Caco-2 (cell line): ENCODE measurements at regions of chr17 and their contacts with region 1.

Region 1: GRCh38 chr17:56592487-56593085 is 913 bp upstream of the NOG start:
- DNase-seq: peak; percentile 46 to 80
- H3K4me3 ChIP-seq: peak overlapping the region; percentile 28
- H3K4me3 Mint-ChIP-seq: peak overlapping the region; percentile 74
- H3K27ac Mint-ChIP-seq: no peak overlapping the region
- H3K4me1 ChIP-seq: peaks cover 24% of the 10 kb centered on the region
- H3K4me1 Mint-ChIP-seq: no peaks in the 10 kb centered on the region
- H3K27me3 ChIP-seq: peaks cover 10% of the 10 kb centered on the region
- H3K27me3 Mint-ChIP-seq: peaks cover 51% of the 10 kb centered on the region
- CTCF ChIP-seq: peak; percentile 64 to 96

Region 2: DNA sequence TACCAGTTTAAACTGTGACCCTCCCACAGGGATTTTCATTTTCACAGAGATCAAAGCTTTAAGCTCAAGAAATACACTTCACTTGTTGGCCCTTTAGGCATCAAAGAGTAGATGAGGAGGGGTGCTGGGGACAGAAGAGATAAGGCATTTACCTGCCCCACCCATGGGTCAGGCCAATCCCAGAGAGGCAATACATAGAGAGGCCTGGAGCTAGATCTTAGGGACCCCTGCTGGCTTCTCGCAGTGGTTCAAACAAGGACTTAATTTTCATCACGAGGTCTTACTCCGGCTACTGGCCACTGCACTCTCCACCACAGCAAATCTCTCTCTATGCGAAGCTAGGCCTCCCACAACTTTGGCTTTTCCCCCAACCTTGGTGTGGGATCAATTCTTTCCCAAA is 47.5 kb after region 1 on chr17:
- CTCF ChIA-PET with region 1: interaction called, 5 read pairs
- POLR2A ChIA-PET with region 1: no interaction called
- intact Hi-C with region 1: loop called (anchors 2 kb)
- DNase-seq: peak in 1 of 2 experiments; percentile 25
- H3K4me3 ChIP-seq: no peak overlapping the region
- H3K4me3 Mint-ChIP-seq: no peak overlapping the region
- H3K27ac Mint-ChIP-seq: no peak overlapping the region
- H3K4me1 ChIP-seq: no peaks in the 10 kb centered on the region
- H3K4me1 Mint-ChIP-seq: peaks cover 7% of the 10 kb centered on the region
- H3K27me3 ChIP-seq: no peaks in the 10 kb centered on the region; the same call in 1 of the 2 replicates
- H3K27me3 Mint-ChIP-seq: peaks cover 31% of the 10 kb centered on the region
- CTCF ChIP-seq: no peak

Region 3: GRCh38 chr17:56653877-56654276 is 61.3 kb after region 1 on chr17:
- CTCF ChIA-PET with region 1: no interaction called
- POLR2A ChIA-PET with region 1: no interaction called
- intact Hi-C with region 1: loop called (anchors 1 kb)
- DNase-seq: peak in 1 of 2 experiments; percentile 60
- H3K4me3 ChIP-seq: no peak overlapping the region
- H3K4me3 Mint-ChIP-seq: no peak overlapping the region
- H3K27ac Mint-ChIP-seq: no peak overlapping the region
- H3K4me1 ChIP-seq: no peaks in the 10 kb centered on the region
- H3K4me1 Mint-ChIP-seq: no peaks in the 10 kb centered on the region
- H3K27me3 ChIP-seq: no peaks in the 10 kb centered on the region
- H3K27me3 Mint-ChIP-seq: peaks cover 3% of the 10 kb centered on the region
- CTCF ChIP-seq: peak; percentile 57 to 72

Region 4: GRCh38 chr17:56679115-56679766 is 86.7 kb after region 1 on chr17:
- CTCF ChIA-PET with region 1: interaction called, 3 read pairs
- POLR2A ChIA-PET with region 1: no interaction called
- intact Hi-C with region 1: loop called (anchors 1 kb)
- DNase-seq: peak in 1 of 2 experiments; percentile 42
- H3K4me3 ChIP-seq: no peak overlapping the region
- H3K4me3 Mint-ChIP-seq: peak overlapping the region; percentile 50
- H3K27ac Mint-ChIP-seq: no peak overlapping the region
- H3K4me1 ChIP-seq: peaks cover 3% of the 10 kb centered on the region; the same call in 1 of the 2 replicates
- H3K4me1 Mint-ChIP-seq: peaks cover 6% of the 10 kb centered on the region
- H3K27me3 ChIP-seq: peaks cover 7% of the 10 kb centered on the region
- H3K27me3 Mint-ChIP-seq: peaks cover 26% of the 10 kb centered on the region
- CTCF ChIP-seq: peak; percentile 58 to 61

Region 5: DNA sequence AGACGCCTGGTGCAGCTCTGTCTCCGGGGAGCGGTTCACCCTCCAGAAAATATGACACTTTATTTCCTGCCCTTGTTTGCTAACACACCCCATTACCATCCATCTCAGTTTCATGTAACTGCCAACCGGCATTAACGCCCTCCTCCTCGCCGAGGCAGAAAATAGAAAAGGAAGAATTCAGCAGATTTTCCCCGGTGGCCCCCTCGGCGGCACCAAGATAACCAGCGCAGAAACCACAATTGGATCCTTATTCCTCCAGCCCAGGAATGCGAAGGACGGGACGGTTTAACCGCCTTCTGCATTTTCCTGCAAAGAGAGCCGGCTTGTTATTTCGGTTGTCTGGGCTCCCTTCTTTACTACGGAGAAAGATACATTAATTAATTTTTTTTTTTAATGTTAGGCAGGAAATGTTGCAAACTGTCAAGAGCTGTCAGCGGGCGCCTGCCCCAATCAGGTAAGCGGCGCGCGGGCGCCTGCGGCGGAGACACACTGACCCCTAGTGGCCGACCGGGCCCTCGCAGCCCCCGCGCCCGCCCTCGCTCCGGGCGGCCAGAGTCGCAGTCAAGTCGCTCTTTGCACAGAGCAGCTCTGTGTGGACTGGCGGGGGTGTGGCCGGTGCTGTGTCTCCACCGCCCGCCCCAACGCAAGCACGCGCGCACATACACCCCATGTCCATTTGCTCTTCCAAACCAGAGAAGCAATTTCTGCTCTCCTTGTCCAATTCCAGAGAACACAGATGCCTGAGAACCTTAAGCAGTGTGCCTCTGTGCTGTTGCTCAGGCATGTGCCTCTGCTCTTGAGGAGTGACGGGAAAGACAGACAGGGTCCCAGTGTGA is 187.5 kb after region 1 on chr17:
- CTCF ChIA-PET with region 1: interaction called, 9 read pairs
- POLR2A ChIA-PET with region 1: no interaction called
- intact Hi-C with region 1: loop called (anchors 2 kb)
- DNase-seq: peak; percentile 75 to 90
- H3K4me3 ChIP-seq: peak overlapping the region; percentile 4; the same call in 1 of the 2 replicates
- H3K4me3 Mint-ChIP-seq: peak overlapping the region; percentile 54
- H3K27ac Mint-ChIP-seq: no peak overlapping the region
- H3K4me1 ChIP-seq: peaks cover 5% of the 10 kb centered on the region; the same call in 1 of the 2 replicates
- H3K4me1 Mint-ChIP-seq: peaks cover 6% of the 10 kb centered on the region
- H3K27me3 ChIP-seq: peaks cover 2% of the 10 kb centered on the region
- H3K27me3 Mint-ChIP-seq: peaks cover 34% of the 10 kb centered on the region
- CTCF ChIP-seq: peak; percentile 90 to 98